H1 (cell line): ENCODE measurements at regions of chr5 and their contacts with region 1.

Region 1: GRCh38 chr5:144333336-144333920 is 162.8 kb downstream of the KCTD16 start:
- DNase-seq: no peak
- H3K4me3 ChIP-seq: no peak overlapping the region
- H3K27ac ChIP-seq: no peak overlapping the region
- H3K4me1 ChIP-seq: no peaks in the 10 kb centered on the region
- H3K27me3 ChIP-seq: no peaks in the 10 kb centered on the region
- CTCF ChIP-seq: no peak
- EP300 ChIP-seq: no peak
- POLR2A ChIP-seq: no peak
- RAD21 ChIP-seq: no peak

Region 2: DNA sequence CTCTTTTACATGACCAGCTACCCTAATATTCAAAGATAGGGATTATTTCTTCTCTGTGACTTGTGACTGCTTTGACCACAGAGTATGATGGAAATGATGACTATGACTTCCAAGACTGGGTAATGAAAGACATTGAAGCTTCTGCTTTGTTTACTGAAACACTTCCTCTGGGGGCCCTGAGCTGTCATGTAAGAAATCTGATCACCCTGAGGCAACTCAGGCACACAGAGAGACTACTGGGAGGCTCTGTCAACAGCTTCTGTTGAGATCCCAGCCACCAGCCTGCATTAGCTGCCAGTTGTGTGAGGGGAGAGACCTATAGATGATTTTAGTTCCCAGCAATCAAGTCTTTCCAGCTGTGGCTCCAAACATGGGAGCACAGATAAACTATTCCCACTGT is 86.3 kb before region 1 on chr5:
- CTCF ChIA-PET with region 1: interaction called, 13 read pairs
- POLR2A ChIA-PET with region 1: no interaction called
- DNase-seq: no peak
- H3K4me3 ChIP-seq: no peak overlapping the region
- H3K27ac ChIP-seq: no peak overlapping the region
- H3K4me1 ChIP-seq: peaks cover 0 to 3% (median 2%) of the 10 kb centered on the region in 4 experiments; a peak in 2 of 7 replicates
- H3K27me3 ChIP-seq: no peaks in the 10 kb centered on the region
- CTCF ChIP-seq: no peak
- EP300 ChIP-seq: no peak
- POLR2A ChIP-seq: no peak
- RAD21 ChIP-seq: no peak